ENCODE measurements at regions of chr10 and their contacts with region 1.

Region 1: GRCh38 chr10:14904316-14904732 is 25.7 kb downstream of the SUV39H2 start:
- DNase-seq: peak; percentile 16
- H3K4me3 Mint-ChIP-seq: no peak overlapping the region
- H3K27ac Mint-ChIP-seq: no peak overlapping the region
- H3K4me1 Mint-ChIP-seq: peaks cover 16% of the 10 kb centered on the region
- H3K27me3 Mint-ChIP-seq: no peaks in the 10 kb centered on the region

Region 2: GRCh38 chr10:14918964-14919363 is 14.6 kb after region 1 on chr10:
- CTCF ChIA-PET with region 1: interaction called, 6 read pairs
- intact Hi-C with region 1: loop called (anchors 1 kb)
- DNase-seq: no peak
- H3K4me3 Mint-ChIP-seq: no peak overlapping the region
- H3K27ac Mint-ChIP-seq: no peak overlapping the region
- H3K4me1 Mint-ChIP-seq: peaks cover 15% of the 10 kb centered on the region
- H3K27me3 Mint-ChIP-seq: no peaks in the 10 kb centered on the region